ENCODE measurements at regions of chr15 and their contacts with region 1.

Region 1: DNA sequence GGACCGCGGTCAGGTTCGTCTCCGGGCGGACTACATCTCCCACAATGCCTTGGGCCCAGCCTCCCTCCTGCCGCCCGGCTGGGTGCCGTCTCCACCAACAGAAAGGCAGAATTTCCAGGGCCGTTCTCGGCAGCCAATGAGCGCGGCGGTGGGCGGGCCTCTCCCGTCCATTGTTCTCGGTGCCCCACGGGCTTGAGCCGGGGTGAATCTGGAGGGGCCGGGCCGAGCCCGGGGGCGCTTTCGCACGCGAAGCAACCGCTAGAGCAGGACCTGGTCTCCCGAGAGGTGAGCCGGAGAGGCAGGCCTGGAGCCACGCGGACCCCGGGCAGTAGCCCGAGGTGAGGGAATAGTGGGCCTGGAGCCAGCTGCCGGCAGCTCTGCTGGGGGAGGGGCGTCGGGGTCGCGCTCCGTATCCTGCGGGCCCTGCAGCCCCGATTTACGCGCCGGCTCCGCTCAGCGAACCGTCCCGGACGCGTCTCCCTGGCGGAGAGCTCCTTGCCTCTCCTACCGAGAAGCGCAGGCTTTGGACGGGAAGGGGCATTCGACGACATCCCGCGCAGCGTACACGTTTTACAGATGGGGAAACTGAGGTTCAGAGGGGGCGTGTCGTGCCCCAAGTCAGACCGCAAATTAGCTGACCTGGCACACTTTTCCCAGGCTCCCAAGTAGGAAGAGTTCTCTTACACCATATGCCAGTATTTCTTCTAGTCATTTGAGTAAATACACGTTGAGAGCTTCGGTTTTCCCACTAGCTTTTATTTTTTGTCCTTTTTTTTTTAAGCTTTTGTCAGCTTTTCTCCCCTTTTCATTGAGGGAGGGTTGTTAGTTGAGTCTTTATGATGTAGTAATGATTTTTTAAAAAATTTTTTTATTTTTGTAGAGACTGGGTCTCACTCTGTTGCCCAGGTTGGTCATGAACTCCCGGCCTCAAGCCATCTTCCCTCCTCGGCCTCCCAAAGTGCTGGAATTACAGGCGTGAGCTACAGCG is at the start of gene ZSCAN2:
- DNase-seq: peak; percentile 95
- H3K4me3 ChIP-seq: peak within 1 kb of the TSS; percentile 87 to 95
- H3K27ac ChIP-seq: peak within 1 kb of the TSS; percentile 58 to 71
- H3K4me1 ChIP-seq: peaks cover 0 to 14% of the 10 kb centered on the region in 2 experiments; a peak in 1 of 4 replicates
- H3K27me3 ChIP-seq: no peaks in the 10 kb centered on the region
- CTCF ChIP-seq: no peak
- EP300 ChIP-seq: no peak
- RAD21 ChIP-seq: no peak
- polyA plus RNA-seq, gene ZSCAN2: 17.8 and 22.0 TPM in 2 replicates

Region 2: GRCh38 chr15:84575493-84575892 is 25.7 kb before region 1 on chr15:
- CTCF ChIA-PET with region 1: interaction called, 14 read pairs
- POLR2A ChIA-PET with region 1: no interaction called
- DNase-seq: no peak
- H3K4me3 ChIP-seq: no peak overlapping the region
- H3K27ac ChIP-seq: no peak overlapping the region
- H3K4me1 ChIP-seq: peaks cover 0 to 7% of the 10 kb centered on the region in 2 experiments; a peak in 1 of 4 replicates
- H3K27me3 ChIP-seq: no peaks in the 10 kb centered on the region
- CTCF ChIP-seq: peak; percentile 16; the same call in 1 of the 2 replicates
- EP300 ChIP-seq: no peak
- RAD21 ChIP-seq: no peak

Region 3: GRCh38 chr15:84621358-84621979 is 20.3 kb after region 1 on chr15:
- CTCF ChIA-PET with region 1: interaction called, 10 read pairs
- POLR2A ChIA-PET with region 1: no interaction called
- DNase-seq: no peak
- H3K4me3 ChIP-seq: peak overlapping the region in 1 of 2 experiments; percentile 16; a peak in 1 of 4 replicates
- H3K27ac ChIP-seq: no peak overlapping the region
- H3K4me1 ChIP-seq: no peaks in the 10 kb centered on the region
- H3K27me3 ChIP-seq: no peaks in the 10 kb centered on the region
- CTCF ChIP-seq: no peak
- EP300 ChIP-seq: no peak
- RAD21 ChIP-seq: no peak

Region 4: GRCh38 chr15:84648539-84648938 is 47.4 kb after region 1 on chr15:
- CTCF ChIA-PET with region 1: interaction called, 14 read pairs
- POLR2A ChIA-PET with region 1: interaction called, 12 read pairs
- DNase-seq: no peak
- H3K4me3 ChIP-seq: no peak overlapping the region
- H3K27ac ChIP-seq: no peak overlapping the region
- H3K4me1 ChIP-seq: peaks cover 14 to 18% of the 10 kb centered on the region in 2 experiments; a peak in 2 of 4 replicates
- H3K27me3 ChIP-seq: no peaks in the 10 kb centered on the region
- CTCF ChIP-seq: no peak
- EP300 ChIP-seq: no peak
- RAD21 ChIP-seq: no peak

Region 5: GRCh38 chr15:84773716-84774115 is 172.6 kb after region 1 on chr15:
- CTCF ChIA-PET with region 1: no interaction called
- POLR2A ChIA-PET with region 1: no interaction called
- DNase-seq: no peak
- H3K4me3 ChIP-seq: no peak overlapping the region
- H3K27ac ChIP-seq: no peak overlapping the region
- H3K4me1 ChIP-seq: peaks cover 0 to 3% of the 10 kb centered on the region in 2 experiments; a peak in 1 of 4 replicates
- H3K27me3 ChIP-seq: no peaks in the 10 kb centered on the region
- CTCF ChIP-seq: no peak
- EP300 ChIP-seq: no peak
- RAD21 ChIP-seq: no peak

Region 6: GRCh38 chr15:84929744-84930371 is 328.7 kb after region 1 on chr15:
- CTCF ChIA-PET with region 1: interaction called, 41 read pairs
- POLR2A ChIA-PET with region 1: interaction called, 3 read pairs
- DNase-seq: peak; percentile 53
- H3K4me3 ChIP-seq: no peak overlapping the region
- H3K27ac ChIP-seq: no peak overlapping the region
- H3K4me1 ChIP-seq: peaks cover 8 to 13% of the 10 kb centered on the region in 2 experiments; a peak in 2 of 4 replicates
- H3K27me3 ChIP-seq: no peaks in the 10 kb centered on the region
- CTCF ChIP-seq: no peak
- EP300 ChIP-seq: no peak
- RAD21 ChIP-seq: no peak

Measured in SK-N-SH (cell line).